ENCODE measurements at regions of chr13 and their contacts with region 1.

Region 1: DNA sequence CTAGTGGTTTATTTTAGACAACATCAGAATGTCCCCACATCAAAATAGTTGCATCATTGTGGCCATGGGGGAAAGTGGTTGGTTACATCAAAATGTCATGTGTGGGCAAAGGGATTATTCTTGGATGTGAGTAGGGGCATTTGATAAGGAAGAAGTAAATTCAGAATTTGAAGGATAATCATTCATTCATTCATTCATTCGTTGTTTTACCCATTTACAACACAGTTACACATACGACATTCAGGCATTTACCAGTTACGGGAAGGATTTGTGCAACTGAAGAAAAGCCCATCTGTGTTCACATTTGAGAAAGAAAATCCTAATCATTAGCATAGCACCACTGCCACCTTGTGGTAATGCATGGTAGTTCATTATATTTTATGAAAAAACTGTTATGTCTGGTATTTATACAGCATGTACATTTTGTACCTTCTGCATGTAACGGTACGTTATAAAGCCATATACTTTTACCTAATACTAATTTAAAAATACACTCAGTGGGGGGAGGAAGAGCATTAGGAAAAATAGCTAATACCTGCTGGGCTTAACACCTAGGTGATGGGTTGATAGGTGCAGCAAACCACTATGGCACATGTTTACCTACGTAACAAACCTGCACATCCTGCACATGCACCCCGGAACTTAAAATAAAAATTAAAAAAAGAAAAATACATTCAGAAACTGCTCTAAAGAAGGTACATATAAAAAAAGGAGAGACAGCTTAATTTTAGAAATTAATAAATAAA is 62.1 kb downstream of the DGKH start:
- DNase-seq: peak; percentile 55
- CTCF ChIP-seq: peak; percentile 48

Region 2: DNA sequence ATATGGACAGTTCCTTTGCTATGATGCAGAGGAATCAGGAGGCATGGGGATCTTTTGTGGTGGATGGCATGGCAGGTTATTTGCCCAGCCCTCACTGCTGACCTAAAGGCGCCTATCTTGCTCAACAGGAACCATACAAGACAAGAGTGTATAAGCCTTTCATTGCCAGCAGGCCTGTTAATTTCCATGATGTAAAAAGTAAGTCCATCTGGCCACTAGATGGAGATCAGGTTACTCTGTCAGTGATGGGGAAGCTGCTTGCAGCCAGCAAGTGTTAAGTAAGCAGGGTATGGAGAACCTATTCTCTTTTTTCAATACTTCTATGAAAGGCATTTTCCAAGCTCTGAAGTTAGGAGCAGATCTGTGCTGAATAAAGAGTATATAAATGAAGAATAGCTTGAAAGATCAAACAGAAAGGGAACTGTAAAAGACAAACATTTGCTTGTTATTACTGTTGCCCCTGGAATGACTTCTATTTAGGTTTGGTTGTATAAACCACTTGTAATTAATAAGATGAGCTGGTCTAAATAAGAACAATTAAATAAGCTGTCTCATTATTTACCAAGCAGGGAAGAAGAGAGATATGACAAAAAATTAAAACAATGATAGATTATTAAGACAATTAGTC is 442.3 kb before region 1 on chr13:
- in situ Hi-C with region 1: loop called (anchors 5 kb)
- DNase-seq: peak; percentile 54
- CTCF ChIP-seq: peak; percentile 69

Measured in GM13976 (cell line).